Common myeloid progenitor, CD34-positive (primary cell): ENCODE measurements at regions of chr11 and their contacts with region 1.

Region 1: GRCh38 chr11:72328366-72329224 is 84.6 kb upstream of the PHOX2A start:
- DNase-seq: no peak
- H3K4me3 ChIP-seq: no peak overlapping the region
- H3K27ac ChIP-seq: no peak overlapping the region
- H3K4me1 ChIP-seq: peaks cover 0 to 28% (median 9%) of the 10 kb centered on the region in 4 experiments
- H3K27me3 ChIP-seq: no peaks in the 10 kb centered on the region

Region 2: GRCh38 chr11:72317982-72318381 is 10.6 kb before region 1 on chr11:
- CTCF ChIA-PET with region 1: interaction called, 13 read pairs
- POLR2A ChIA-PET with region 1: no interaction called
- DNase-seq: no peak
- H3K4me3 ChIP-seq: no peak overlapping the region
- H3K27ac ChIP-seq: no peak overlapping the region
- H3K4me1 ChIP-seq: no peaks in the 10 kb centered on the region
- H3K27me3 ChIP-seq: no peaks in the 10 kb centered on the region

Region 3: GRCh38 chr11:72396041-72396440 is 67.4 kb after region 1 on chr11:
- CTCF ChIA-PET with region 1: no interaction called
- POLR2A ChIA-PET with region 1: no interaction called
- DNase-seq: no peak
- H3K4me3 ChIP-seq: no peak overlapping the region
- H3K27ac ChIP-seq: no peak overlapping the region
- H3K4me1 ChIP-seq: no peaks in the 10 kb centered on the region
- H3K27me3 ChIP-seq: no peaks in the 10 kb centered on the region